ENCODE measurements at regions of chr6 and their contacts with region 1.

Region 1: GRCh38 chr6:24855395-24856245 is 56.9 kb upstream of the ARMH2 start:
- DNase-seq: peak; percentile 81
- H3K4me3 Mint-ChIP-seq: peak overlapping the region; percentile 17
- H3K27ac Mint-ChIP-seq: peak overlapping the region; percentile 89
- H3K4me1 Mint-ChIP-seq: peaks cover 56% of the 10 kb centered on the region
- H3K27me3 Mint-ChIP-seq: no peaks in the 10 kb centered on the region

Region 2: GRCh38 chr6:24766680-24767462 is 88.7 kb before region 1 on chr6:
- CTCF ChIA-PET with region 1: no interaction called
- POLR2A ChIA-PET with region 1: no interaction called
- intact Hi-C with region 1: no loop called
- DNase-seq: no peak
- H3K4me3 Mint-ChIP-seq: no peak overlapping the region
- H3K27ac Mint-ChIP-seq: no peak overlapping the region
- H3K4me1 Mint-ChIP-seq: peaks cover 4% of the 10 kb centered on the region
- H3K27me3 Mint-ChIP-seq: no peaks in the 10 kb centered on the region

Region 3: DNA sequence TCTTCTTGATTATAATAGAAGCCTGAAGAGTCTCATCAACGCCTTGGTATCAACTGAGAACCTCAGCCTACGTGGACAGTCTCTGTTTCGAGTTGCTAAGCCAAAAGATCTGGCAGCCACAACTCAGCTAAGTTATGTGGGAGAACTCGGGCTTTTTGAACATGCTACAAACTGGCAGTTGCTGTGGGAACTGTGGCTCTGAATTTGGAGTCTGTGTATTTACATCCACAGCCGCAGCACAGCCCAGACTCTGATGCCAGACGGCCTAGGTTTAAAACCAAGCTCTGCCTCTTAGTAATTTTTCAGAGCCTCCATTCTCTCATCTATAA is 44.3 kb after region 1 on chr6:
- CTCF ChIA-PET with region 1: interaction called, 34 read pairs
- POLR2A ChIA-PET with region 1: interaction called, 3 read pairs
- intact Hi-C with region 1: loop called (anchors 2 kb)
- DNase-seq: peak; percentile 70
- H3K4me3 Mint-ChIP-seq: peak overlapping the region; percentile 59
- H3K27ac Mint-ChIP-seq: peak overlapping the region; percentile 90
- H3K4me1 Mint-ChIP-seq: peaks cover 88% of the 10 kb centered on the region
- H3K27me3 Mint-ChIP-seq: no peaks in the 10 kb centered on the region

Region 4: DNA sequence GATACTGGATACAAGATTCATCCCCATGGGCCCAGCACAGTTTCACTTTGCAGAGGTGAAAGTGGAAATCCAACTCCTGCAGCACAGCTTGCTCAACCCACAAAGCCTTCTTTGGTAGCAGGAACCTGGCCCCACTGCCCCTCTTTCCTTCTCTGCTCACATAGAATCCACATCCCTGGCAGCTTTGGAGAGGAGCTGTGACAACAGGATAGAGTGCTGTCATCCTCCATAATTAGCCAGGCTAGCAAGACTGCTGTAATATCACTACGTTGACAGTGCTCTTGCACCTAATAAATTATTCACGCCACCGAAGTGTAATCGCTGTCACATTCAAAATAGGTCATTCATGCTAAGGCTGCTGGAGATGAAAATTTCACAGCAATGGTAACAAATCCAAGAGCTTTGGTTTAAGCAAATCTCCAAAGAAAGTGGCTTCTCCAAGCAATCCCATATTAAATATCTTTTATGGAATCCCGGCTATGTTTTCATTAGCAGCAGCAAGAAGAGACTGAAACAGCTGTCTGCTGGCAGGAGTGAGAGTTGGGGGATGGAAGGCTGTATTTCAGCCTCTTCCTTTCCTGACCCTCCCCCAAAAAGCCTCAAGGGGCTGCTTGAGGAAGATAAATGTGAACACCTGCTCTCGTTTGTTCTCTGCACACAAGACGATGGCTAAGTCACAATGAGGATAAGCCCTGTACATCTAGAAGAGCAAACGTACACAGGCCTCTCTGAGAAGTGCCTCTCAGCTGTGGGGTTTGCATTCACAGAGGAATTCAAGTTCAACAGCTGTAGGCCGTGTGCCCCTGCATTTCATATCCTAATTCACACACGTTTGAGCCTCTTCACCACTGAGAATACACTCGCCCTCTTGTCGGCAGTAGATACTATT is 63.6 kb after region 1 on chr6:
- CTCF ChIA-PET with region 1: interaction called, 23 read pairs
- POLR2A ChIA-PET with region 1: interaction called, 3 read pairs
- intact Hi-C with region 1: no loop called
- DNase-seq: peak; percentile 51
- H3K4me3 Mint-ChIP-seq: peak overlapping the region; percentile 56
- H3K27ac Mint-ChIP-seq: peak overlapping the region; percentile 85
- H3K4me1 Mint-ChIP-seq: peaks cover 88% of the 10 kb centered on the region
- H3K27me3 Mint-ChIP-seq: no peaks in the 10 kb centered on the region

Region 5: DNA sequence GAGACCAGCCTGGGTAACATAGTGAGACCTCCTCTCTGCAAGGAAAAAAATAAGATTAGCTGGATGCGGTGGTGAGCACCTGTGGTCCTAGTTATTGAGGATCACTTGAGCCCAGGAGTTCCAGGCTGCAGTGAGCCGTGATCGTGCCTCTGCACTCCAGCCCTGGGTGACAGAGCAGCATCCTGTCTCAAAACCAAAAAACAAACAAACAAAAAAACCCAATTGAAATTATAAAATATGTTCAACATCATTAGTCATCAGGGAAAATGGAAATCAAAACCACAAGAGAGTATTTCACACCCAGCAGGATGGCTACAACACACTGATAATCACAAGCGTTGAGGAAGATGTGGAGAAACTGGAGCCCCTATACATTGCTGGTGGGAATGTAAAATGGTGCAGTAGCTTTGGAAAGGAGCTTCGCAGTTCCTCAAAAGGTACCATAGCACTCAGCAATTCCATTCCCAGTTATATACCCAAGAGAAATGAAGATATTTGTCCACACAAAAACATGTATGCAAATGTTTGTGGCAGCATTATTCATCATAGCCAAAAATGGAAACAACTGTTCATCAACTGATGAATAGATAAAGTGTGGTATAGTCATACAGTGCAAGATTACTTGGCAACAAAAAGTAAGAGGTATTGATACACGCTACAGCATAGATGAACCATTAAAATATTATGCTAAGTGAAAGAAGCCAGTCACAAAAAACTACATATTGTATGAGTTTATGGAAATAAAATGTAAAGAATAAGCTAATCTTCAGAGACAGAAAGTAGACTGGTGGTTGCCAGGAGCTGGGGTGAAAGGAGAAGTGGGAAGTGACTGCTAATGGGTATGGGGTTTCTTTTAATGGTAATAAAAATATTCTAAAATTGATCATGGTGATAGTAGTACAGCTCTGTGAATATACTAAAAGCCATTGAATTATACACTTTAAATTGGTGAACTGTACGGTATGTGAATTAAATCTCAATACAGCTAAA is 118.9 kb after region 1 on chr6:
- CTCF ChIA-PET with region 1: interaction called, 8 read pairs
- POLR2A ChIA-PET with region 1: interaction called, 10 read pairs
- intact Hi-C with region 1: loop called (anchors 1 kb)
- DNase-seq: peak; percentile 69
- H3K4me3 Mint-ChIP-seq: peak overlapping the region; percentile 48
- H3K27ac Mint-ChIP-seq: peak overlapping the region; percentile 90
- H3K4me1 Mint-ChIP-seq: peaks cover 64% of the 10 kb centered on the region
- H3K27me3 Mint-ChIP-seq: no peaks in the 10 kb centered on the region

Region 6: DNA sequence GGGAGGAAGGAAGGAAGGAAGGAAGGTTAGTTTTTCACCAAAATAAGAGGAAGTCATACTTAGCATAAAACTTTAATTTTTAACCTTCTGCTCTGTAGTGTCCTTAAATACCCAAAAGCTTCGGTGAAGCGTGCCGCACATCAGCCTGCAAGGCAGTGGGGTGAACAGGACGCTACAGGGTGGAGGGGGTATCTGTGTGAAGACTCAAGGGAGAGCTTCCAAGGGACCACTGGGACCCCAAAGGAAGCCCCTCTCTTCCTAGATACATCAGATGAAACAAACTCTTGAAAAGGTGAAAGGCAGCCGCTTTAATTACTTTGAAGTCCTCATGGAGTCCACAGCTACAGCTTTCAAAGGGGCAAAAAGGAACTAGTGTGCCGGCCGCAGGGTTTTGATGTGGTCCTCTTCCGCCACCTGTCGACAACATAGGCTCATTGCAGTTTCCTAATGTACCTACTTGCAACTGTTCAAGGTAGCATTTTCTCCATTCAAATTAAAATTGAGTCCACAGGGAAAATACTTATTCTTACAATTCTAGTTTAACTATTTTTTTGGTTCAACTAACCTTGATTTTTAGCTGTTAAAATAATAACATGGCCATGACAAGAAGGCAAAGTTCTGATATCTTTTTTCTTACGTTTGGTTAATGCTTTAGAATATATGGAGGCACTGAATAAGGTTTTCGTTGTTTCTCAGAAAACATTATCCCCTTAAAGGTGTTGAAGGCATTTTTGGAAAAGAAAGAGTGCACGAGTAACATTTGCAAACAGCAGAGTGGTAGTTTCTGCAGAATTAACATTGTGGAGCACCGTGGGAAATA is 215.1 kb after region 1 on chr6:
- CTCF ChIA-PET with region 1: interaction called, 36 read pairs
- POLR2A ChIA-PET with region 1: no interaction called
- intact Hi-C with region 1: loop called (anchors 1 kb)
- DNase-seq: peak; percentile 90
- H3K4me3 Mint-ChIP-seq: peak overlapping the region; percentile 44
- H3K27ac Mint-ChIP-seq: peak overlapping the region; percentile 78
- H3K4me1 Mint-ChIP-seq: peaks cover 10% of the 10 kb centered on the region
- H3K27me3 Mint-ChIP-seq: no peaks in the 10 kb centered on the region

Measured in activated CD4-positive, alpha-beta memory T cell treated with anti-CD3 and anti-CD28 coated beads for 36 hours (primary cell).